ENCODE measurements at regions of chr11 and their contacts with region 1.

Region 1: DNA sequence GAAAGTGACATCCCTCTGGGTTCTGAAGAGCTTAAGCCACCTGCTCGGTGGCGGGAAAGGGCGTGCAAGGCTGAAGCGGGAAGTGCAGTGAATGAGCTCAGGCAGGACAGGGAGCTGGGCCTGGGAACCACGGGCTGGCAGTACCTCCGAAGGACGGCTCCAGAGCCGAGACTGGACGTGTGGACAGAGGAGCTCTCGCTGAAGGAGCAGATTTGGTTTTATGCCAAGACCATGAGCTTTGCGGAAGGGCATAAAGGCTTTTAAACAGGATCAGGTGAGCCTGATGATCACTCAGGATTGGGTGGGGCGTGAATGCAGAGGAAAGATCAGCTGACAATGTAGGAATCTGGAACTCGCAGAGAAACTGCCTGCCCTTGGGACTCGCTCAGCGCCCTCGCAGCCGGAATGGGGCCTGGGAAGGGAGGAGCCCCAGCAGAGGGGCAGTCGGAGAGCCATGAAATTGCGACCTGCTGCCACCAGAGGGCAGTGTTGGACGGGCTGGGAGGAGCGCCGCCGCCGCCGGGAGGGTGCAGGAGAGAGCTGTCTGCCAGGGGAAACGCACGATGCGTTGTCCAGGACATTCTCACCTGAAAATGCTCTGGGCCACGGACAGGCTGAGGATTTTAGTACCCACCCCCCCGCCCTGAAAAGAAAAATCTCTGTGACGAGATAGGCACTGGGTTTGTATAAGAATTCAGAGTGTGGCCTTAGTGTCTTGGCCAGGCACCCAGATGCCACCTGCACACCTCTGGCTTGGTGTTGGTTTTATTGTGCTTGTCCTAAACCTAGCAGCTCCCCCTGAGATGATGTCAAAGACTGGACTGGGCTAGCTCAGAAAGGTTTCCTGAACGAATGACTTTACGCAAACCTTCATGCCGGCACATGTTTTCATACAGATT is 324.4 kb downstream of the NTM start:
- DNase-seq: no peak
- H3K4me3 ChIP-seq: no peak overlapping the region
- CTCF ChIP-seq: peak; percentile 100

Region 2: DNA sequence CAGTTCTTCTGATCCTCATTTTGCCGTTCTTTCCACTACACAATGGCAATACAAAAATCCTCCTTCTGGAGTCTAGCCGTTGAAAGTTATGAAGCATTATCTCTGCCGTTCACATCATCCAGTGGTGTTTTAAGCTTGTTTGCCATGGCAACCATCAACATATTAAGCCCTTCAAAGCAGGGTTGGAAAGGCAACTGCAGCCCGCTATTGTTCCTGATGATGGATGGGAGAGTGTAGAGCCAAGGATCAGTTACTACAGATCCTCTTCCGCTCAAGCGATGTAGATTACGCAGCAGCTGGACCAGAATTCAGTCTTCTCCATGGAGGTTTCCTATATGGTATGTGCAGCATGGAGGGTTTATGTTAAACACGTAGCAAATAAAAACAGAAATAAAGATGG is 28.3 kb after region 1 on chr11:
- CTCF ChIA-PET with region 1: interaction called, 15 read pairs
- POLR2A ChIA-PET with region 1: no interaction called
- DNase-seq: no peak
- H3K4me3 ChIP-seq: no peak overlapping the region
- CTCF ChIP-seq: no peak

Region 3: GRCh38 chr11:131748151-131749050 is 53.6 kb after region 1 on chr11:
- CTCF ChIA-PET with region 1: interaction called, 83 read pairs
- POLR2A ChIA-PET with region 1: no interaction called
- DNase-seq: no peak
- H3K4me3 ChIP-seq: no peak overlapping the region; the same call in 1 of the 2 replicates
- CTCF ChIP-seq: peak; percentile 80

Region 4: DNA sequence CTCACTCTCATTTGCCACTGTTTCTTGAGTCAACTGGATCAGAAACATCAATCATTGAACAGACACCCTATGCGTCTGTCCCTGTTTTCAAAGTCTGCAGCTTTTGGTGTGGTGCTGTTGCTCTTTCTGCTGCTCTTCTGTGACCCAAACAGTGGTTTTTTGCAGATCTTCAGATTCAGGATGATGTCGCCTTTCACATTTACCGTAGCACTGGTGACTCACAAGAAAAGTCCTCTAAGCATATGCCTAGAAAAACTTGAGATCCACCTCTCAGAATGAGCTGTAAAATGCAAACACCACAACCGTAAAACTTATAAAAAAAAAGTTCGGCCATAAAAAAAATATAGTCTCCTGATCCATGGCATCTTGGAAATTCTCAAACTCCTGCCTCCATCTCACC is 76.0 kb after region 1 on chr11:
- CTCF ChIA-PET with region 1: interaction called, 13 read pairs
- POLR2A ChIA-PET with region 1: no interaction called
- DNase-seq: no peak
- H3K4me3 ChIP-seq: no peak overlapping the region
- CTCF ChIP-seq: no peak

Region 5: GRCh38 chr11:131867457-131868257 is 172.9 kb after region 1 on chr11:
- CTCF ChIA-PET with region 1: interaction called, 58 read pairs
- POLR2A ChIA-PET with region 1: no interaction called
- DNase-seq: peak; percentile 47
- H3K4me3 ChIP-seq: no peak overlapping the region
- CTCF ChIP-seq: peak; percentile 90

Region 6: DNA sequence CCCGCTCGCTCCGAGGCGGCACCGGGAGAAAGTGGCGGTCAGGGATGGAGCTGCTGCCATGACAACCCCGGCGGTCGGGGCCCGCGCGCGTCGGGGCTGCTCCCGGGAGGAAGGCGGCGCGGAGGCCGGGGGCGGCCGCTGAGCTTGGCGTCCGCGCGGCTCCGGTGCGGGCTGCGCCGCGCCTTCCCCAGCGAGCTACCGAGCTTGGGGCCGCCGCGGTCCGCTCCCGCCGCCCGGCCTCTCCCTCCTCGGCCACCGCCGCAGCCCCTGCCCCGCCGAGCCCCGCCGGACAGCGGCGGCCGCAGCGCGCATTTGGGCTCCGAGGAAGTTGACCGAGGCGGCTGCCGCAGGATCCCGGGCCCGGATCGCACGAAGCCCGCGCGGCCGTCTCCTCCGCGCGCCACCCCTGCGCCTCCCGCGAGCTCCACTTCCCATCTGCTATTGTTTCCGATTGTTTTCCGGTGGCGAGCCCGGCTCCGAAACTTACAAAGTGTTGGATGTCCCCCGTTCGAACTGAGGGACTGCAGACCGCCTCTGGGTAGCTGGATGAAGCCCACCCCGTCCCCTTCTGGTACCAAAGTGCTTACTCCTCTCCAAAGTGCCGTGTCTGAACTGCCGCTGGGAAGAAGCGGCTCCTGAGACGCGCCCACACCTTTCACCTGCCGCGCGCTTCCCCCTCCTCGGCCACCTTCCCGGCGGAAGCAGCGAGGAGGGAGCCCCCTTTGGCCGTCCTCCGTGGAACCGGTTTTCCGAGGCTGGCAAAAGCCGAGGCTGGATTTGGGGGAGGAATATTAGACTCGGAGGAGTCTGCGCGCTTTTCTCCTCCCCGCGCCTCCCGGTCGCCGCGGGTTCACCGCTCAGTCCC is 216.0 kb after region 1 on chr11:
- CTCF ChIA-PET with region 1: interaction called, 138 read pairs
- POLR2A ChIA-PET with region 1: no interaction called
- DNase-seq: no peak
- H3K4me3 ChIP-seq: peak overlapping the region; percentile 82
- CTCF ChIP-seq: no peak

Region 7: DNA sequence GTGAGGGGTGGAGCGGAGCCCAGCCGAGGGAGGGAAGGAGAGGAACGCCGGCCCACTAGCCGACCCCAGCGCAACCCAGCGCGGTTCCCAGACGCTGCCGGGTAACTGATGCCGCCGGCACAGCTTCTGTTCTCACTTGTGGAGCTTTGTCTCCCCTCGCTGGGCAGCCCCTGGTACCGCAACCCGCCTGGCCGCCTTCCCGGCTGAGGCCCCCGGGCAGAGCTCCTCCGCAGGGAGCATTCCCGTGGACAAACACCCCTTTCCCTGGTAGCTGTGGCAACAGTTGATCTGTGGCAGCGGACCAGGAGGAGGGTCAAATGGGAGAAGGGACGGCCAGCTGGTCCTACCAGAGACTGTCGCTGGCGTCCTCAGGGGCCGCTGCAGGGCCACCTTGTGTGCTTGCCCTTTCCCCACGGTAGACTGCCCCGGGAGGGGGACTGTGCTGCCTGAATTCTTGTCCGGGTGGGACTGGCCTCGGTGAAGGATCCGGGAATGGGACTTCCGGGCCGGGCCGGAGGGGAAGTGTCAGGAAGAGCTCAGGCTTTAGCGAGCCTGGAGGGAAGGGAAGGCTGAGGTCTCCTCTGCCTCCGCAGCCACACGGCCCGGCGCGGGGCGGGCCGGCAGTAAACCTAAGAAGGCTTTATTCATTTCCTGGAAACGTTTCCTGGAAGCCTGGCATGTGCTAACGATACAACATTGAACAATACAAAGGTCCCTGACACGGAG is 1369.5 kb after region 1 on chr11:
- CTCF ChIA-PET with region 1: interaction called, 36 read pairs
- POLR2A ChIA-PET with region 1: no interaction called
- DNase-seq: peak; percentile 23
- H3K4me3 ChIP-seq: peak overlapping the region; percentile 71
- CTCF ChIP-seq: peak; percentile 96

Measured in AG04449 (cell line).